ENCODE measurements at regions of chr16 and their contacts with region 1.

Region 1: DNA sequence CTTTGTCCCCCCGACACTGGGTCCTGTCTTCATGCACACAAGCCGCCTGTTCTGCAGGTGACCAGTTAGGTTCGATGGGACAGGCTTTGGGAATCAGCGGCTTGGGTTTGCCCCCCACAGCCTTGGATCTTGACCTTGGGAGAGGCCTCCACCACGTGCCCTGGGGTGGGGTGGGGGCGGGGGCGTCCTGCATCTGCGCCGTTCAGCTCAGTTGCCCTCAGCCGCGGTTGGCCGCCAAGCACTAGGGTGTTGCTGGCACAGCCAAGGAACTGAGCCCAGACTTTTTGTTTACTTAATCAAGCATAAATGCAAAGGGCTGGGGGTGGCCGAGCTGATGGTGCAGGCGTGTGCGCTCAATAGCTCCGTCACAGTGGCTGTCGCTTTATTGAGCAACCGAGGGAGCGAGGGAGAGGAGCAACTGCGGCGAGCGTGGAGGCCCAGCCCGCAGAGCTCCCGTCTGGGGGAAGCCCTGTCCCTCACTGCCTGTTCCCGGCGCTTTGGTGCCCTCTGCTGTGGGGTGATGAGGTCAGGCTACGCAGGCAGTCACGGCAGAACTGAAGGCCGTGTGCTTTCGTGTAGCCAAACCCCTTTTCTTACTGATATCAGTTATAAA is 33.9 kb downstream of the JPH3 start:
- DNase-seq: peak; percentile 80 to 83
- ATAC-seq: peak; percentile 91 to 97 (median 95)
- H3K4me3 ChIP-seq: peak overlapping the region in 5 of 10 donors; percentile 18 to 34 (median 30)
- H3K27ac ChIP-seq: no peak overlapping the region
- H3K4me1 ChIP-seq: peaks cover 0 to 16% (median 11%) of the 10 kb centered on the region in 9 donors
- H3K27me3 ChIP-seq: peaks cover 0 to 53% (median 12%) of the 10 kb centered on the region in 7 donors
- CTCF ChIP-seq: peak; percentile 47 to 78 (median 70)

Region 2: GRCh38 chr16:87387942-87388817 is 248.0 kb before region 1 on chr16:
- intact Hi-C with region 1: loop called in 3 of 10 experiments (anchors 5 to 10 kb)
- DNase-seq: peak; percentile 82 to 97
- ATAC-seq: peak; percentile 59 to 85 (median 74)
- H3K4me3 ChIP-seq: peak overlapping the region in 7 of 10 donors; percentile 23 to 41 (median 29)
- H3K27ac ChIP-seq: peak overlapping the region; percentile 83 to 95 (median 88)
- H3K4me1 ChIP-seq: peaks cover 10 to 45% (median 41%) of the 10 kb centered on the region in 9 donors
- H3K27me3 ChIP-seq: no peaks in the 10 kb centered on the region
- CTCF ChIP-seq: no peak

Region 3: GRCh38 chr16:87416826-87417527 is 219.2 kb before region 1 on chr16:
- intact Hi-C with region 1: loop called in 5 of 10 experiments (anchors 2 to 10 kb)
- DNase-seq: no peak
- ATAC-seq: no peak
- H3K4me3 ChIP-seq: no peak overlapping the region
- H3K27ac ChIP-seq: no peak overlapping the region
- H3K4me1 ChIP-seq: peaks cover 0 to 5% (median 0%) of the 10 kb centered on the region in 9 donors
- H3K27me3 ChIP-seq: no peaks in the 10 kb centered on the region
- CTCF ChIP-seq: peak; percentile 37 to 80 (median 70)

Region 4: GRCh38 chr16:87581833-87582203 is 54.4 kb before region 1 on chr16:
- intact Hi-C with region 1: loop called in 1 of 10 experiments (anchors 5 kb)
- DNase-seq: peak; percentile 64 to 78
- ATAC-seq: peak; percentile 85 to 93 (median 88)
- H3K4me3 ChIP-seq: peak overlapping the region in 4 of 10 donors; percentile 9 to 30 (median 24)
- H3K27ac ChIP-seq: peak overlapping the region; percentile 69 to 87 (median 80)
- H3K4me1 ChIP-seq: peaks cover 4 to 25% (median 18%) of the 10 kb centered on the region in 9 donors
- H3K27me3 ChIP-seq: peaks cover 0 to 52% (median 31%) of the 10 kb centered on the region in 7 donors
- CTCF ChIP-seq: no peak

Region 5: DNA sequence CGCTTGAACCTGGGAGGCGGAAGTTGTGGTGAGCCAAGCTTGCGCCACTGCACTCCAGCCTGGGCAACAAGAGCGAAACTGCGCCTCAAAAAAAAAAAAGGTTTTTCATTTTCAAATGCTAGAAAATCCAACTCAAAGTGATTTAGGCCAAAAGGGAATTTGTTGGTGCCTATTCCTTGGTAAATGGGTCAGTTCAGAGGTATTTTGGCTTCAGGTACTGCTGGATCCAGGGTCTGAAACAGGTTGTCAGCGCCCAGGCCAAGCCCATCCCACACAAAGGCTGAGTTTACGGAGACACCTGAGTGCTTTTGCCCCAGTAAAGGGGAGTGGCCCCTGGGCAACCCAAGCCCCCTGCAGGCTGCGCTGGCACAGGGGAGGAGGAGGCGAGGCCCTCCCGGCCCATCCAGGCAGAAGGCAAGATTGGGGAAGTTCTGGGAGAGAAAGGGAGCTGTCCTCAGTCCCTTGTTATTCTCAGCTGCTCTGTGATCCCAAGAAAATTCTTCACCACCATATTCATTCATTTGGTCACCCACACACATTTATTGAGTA is 42.4 kb before region 1 on chr16:
- intact Hi-C with region 1: loop called in 7 of 10 experiments (anchors 1 to 5 kb)
- DNase-seq: no peak
- ATAC-seq: no peak
- H3K4me3 ChIP-seq: no peak overlapping the region
- H3K27ac ChIP-seq: no peak overlapping the region
- H3K4me1 ChIP-seq: peaks cover 0 to 5% (median 4%) of the 10 kb centered on the region in 9 donors
- H3K27me3 ChIP-seq: peaks cover 0 to 65% (median 28%) of the 10 kb centered on the region in 7 donors
- CTCF ChIP-seq: no peak

Region 6: GRCh38 chr16:87778830-87779579 is 142.8 kb after region 1 on chr16:
- intact Hi-C with region 1: no loop called
- DNase-seq: peak; percentile 81 to 88
- ATAC-seq: peak; percentile 83 to 94 (median 91)
- H3K4me3 ChIP-seq: no peak overlapping the region
- H3K27ac ChIP-seq: peak overlapping the region in 1 of 10 donors; percentile 74
- H3K4me1 ChIP-seq: peaks cover 0 to 40% (median 14%) of the 10 kb centered on the region in 9 donors
- H3K27me3 ChIP-seq: peaks cover 0 to 8% (median 4%) of the 10 kb centered on the region in 7 donors
- CTCF ChIP-seq: peak; percentile 93 to 99 (median 97)

Region 7: DNA sequence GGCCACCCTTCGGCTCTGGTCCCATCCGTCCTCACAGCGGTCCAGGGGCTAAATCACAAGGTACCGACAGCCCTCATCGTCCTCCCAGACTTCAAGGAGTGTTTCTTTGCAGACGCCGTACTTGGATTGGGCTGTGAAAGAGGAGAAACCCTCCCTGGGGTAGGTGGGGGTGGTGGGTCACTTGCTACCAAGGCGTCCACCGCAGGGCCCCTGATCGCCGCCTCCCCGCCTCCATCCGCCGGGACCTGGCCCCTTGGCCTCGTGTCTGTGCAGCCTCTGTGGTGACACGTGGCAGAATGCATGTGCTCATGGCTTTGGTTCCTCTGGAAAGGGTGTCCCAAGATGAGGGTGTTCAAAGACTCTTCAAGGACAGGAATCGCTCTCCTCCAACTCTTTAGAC is 466.4 kb after region 1 on chr16:
- intact Hi-C with region 1: no loop called
- DNase-seq: no peak
- ATAC-seq: no peak
- H3K4me3 ChIP-seq: no peak overlapping the region
- H3K27ac ChIP-seq: no peak overlapping the region
- H3K4me1 ChIP-seq: no peaks in the 10 kb centered on the region
- H3K27me3 ChIP-seq: peaks cover 0 to 46% (median 37%) of the 10 kb centered on the region in 7 donors
- CTCF ChIP-seq: no peak

Measured in heart right ventricle (tissue), 16 donors.